ENCODE measurements at regions of chr1 and their contacts with region 1.

Region 1: DNA sequence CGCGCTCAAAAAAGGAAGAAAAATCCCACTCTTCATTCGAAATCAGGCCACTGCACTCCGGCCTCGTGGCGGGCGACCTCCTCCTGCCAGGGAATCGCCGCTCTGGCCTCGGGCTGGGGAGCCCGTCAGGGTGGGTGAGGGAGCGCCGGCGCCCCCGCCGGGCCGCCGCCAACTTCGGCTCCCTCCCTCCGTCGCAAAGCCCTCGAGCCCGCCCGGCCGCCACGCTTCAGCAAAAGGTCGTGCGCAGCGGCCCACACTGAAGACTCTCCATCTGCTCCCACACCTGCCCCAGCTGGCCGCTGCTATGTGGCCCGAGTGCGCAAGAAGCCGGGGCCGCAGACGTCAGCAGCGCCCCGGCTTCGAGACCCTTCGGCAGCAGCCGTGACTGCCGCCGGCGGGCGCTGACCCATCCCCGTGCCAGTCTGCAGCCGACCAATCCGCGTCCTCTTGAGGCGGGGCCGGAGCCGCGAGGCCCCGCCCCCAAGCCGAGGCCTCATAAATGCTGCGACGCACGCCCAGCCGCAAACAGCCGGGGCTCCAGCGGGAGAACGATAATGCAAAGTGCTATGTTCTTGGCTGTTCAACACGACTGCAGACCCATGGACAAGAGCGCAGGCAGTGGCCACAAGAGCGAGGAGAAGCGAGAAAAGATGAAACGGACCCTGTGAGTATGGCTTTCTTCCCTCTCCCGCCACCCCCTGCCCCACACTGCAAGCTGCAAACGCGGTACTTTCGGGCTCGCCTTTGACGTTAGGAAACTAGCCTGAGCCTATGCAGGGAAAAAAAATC is at the start of gene RGS2:
- DNase-seq: peak; percentile 96
- ATAC-seq: peak; percentile 98
- total RNA-seq, gene RGS2: 19.4 TPM

Region 2: GRCh38 chr1:192626366-192627179 is 182.1 kb before region 1 on chr1:
- intact Hi-C with region 1: loop called (anchors 5 kb)
- DNase-seq: no peak
- ATAC-seq: peak; percentile 79

Region 3: GRCh38 chr1:193019442-193020026 is 210.8 kb after region 1 on chr1:
- intact Hi-C with region 1: loop called (anchors 1 kb)
- DNase-seq: no peak
- ATAC-seq: no peak

Region 4: DNA sequence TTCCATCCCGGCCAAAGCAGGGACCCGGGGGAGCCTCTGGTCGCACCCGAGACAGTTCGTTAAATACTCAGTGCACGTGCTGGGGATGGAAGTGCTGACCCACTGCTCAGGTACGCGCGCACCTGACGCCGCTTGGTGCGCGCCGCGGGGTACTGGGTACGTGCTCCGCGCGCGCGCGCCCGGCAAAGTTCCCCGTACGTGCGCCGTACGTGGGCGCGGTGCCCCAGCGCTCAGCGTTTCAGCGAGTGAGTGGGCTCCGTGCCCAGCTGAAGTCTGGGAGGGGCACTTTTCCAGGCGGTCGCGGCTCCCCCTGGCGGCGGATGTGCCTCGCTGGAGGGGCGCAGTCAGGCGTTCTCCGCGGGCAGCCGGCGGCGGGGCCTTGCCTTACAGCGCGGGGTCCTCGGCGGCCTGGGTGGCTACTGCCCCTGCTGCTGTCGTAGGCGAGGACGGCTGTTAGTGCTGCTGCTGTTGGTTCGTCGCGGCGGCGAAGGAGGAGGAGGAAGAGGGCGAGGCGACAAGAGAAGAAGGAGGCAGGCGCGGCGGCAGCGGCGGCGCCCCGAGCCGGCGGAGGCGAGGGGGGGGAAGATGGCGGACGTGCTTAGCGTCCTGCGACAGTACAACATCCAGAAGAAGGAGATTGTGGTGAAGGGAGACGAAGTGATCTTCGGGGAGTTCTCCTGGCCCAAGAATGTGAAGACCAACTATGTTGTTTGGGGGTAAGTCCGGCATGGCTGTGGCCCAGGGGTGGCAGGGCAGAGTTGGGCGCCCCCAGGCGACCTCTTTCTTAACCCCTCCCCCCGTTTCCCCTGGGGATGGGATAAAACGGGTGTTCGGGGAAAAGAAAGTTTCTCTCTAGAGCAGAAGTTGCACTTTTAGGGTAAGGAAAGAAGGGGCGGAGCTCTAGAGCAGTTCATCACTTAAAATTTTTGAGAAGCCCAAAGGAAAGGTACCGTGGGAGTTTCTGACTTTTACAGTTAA is 313.2 kb after region 1 on chr1 and contains the start of gene CDC73:
- intact Hi-C with region 1: loop called (anchors 5 kb)
- DNase-seq: peak; percentile 99
- ATAC-seq: peak; percentile 100
- total RNA-seq, gene CDC73: 48.6 TPM

Measured in Right ventricle myocardium inferior (tissue), 1 donor.